HCT116 (cell line): ENCODE measurements at regions of chr5 and their contacts with region 1.

Region 1: GRCh38 chr5:83564069-83564749 is 92.7 kb downstream of the VCAN start:
- DNase-seq: peak; percentile 35
- ATAC-seq: peak; percentile 67
- H3K4me3 ChIP-seq: no peak overlapping the region
- H3K27ac ChIP-seq: no peak overlapping the region
- H3K4me1 ChIP-seq: peaks cover 9 to 13% of the 10 kb centered on the region in 2 experiments; a peak in 2 of 4 replicates
- H3K27me3 ChIP-seq: no peaks in the 10 kb centered on the region
- CTCF ChIP-seq: peak; percentile 29 to 71 (median 65); a peak in 4 of 6 replicates
- POLR2A ChIP-seq: no peak
- RAD21 ChIP-seq: peak; percentile 83

Region 2: GRCh38 chr5:82312373-82312856 is 1251.8 kb before region 1 on chr5:
- CTCF ChIA-PET with region 1: no interaction called
- POLR2A ChIA-PET with region 1: no interaction called
- RAD21 ChIA-PET with region 1: interaction called in 1 of 2 experiments, 8 read pairs
- intact Hi-C with region 1: loop called (anchors 1 kb)
- DNase-seq: peak; percentile 54
- ATAC-seq: peak; percentile 80
- H3K4me3 ChIP-seq: peak overlapping the region in 1 of 2 experiments; percentile 29; a peak in 1 of 4 replicates
- H3K27ac ChIP-seq: peak overlapping the region; percentile 53
- H3K4me1 ChIP-seq: peaks cover 17 to 18% of the 10 kb centered on the region in 2 experiments
- H3K27me3 ChIP-seq: no peaks in the 10 kb centered on the region
- CTCF ChIP-seq: peak; percentile 65 to 97 (median 87); a peak in 5 of 6 replicates
- POLR2A ChIP-seq: no peak
- RAD21 ChIP-seq: peak; percentile 90

Region 3: GRCh38 chr5:82597437-82597836 is 966.8 kb before region 1 on chr5:
- CTCF ChIA-PET with region 1: no interaction called
- POLR2A ChIA-PET with region 1: no interaction called
- RAD21 ChIA-PET with region 1: no interaction called
- intact Hi-C with region 1: loop called (anchors 5 kb)
- DNase-seq: peak; percentile 29
- ATAC-seq: peak; percentile 82
- H3K4me3 ChIP-seq: no peak overlapping the region
- H3K27ac ChIP-seq: no peak overlapping the region
- H3K4me1 ChIP-seq: no peaks in the 10 kb centered on the region
- H3K27me3 ChIP-seq: no peaks in the 10 kb centered on the region
- CTCF ChIP-seq: peak; percentile 28 to 65 (median 63); a peak in 5 of 6 replicates
- POLR2A ChIP-seq: no peak
- RAD21 ChIP-seq: peak; percentile 52

Region 4: GRCh38 chr5:82905986-82906385 is 658.2 kb before region 1 on chr5:
- CTCF ChIA-PET with region 1: no interaction called
- POLR2A ChIA-PET with region 1: no interaction called
- RAD21 ChIA-PET with region 1: no interaction called
- intact Hi-C with region 1: loop called (anchors 10 kb)
- DNase-seq: no peak
- ATAC-seq: no peak
- H3K4me3 ChIP-seq: no peak overlapping the region
- H3K27ac ChIP-seq: no peak overlapping the region
- H3K4me1 ChIP-seq: no peaks in the 10 kb centered on the region
- H3K27me3 ChIP-seq: no peaks in the 10 kb centered on the region
- CTCF ChIP-seq: no peak
- POLR2A ChIP-seq: no peak
- RAD21 ChIP-seq: no peak

Region 5: DNA sequence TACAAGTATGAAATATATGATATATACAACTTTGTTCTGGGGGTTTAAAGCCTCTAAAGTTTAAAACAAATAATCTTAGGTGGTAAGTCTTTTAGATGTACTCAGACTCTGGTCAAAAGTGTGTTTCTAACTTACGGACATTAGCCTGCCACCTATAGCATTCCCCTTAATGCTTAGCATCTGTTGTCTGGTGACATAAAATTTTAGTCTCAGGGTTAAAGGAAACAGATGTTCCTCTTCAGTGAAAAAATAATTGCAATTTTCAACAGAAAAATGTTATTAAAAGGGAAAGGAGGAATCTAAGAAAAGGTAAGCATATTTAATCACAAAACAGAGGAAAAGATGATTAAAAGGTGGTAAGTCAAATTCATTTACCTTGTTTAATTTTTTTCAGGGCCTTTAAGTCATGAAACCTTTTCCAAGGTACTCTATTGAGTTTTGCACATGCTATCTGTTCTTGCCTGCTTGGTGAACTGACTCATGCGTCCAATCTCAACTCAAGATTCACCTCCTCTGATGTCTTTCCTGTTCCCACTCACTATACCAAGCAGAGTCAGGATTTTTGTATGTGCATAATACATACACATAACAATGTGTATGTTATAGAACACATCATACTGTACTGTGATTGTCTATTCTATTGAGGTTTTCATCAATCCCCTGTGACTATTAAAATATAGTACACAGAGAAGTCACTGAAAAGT is 495.0 kb before region 1 on chr5:
- CTCF ChIA-PET with region 1: no interaction called
- POLR2A ChIA-PET with region 1: no interaction called
- RAD21 ChIA-PET with region 1: no interaction called
- intact Hi-C with region 1: loop called (anchors 5 kb)
- DNase-seq: no peak
- ATAC-seq: no peak
- H3K4me3 ChIP-seq: no peak overlapping the region
- H3K27ac ChIP-seq: no peak overlapping the region
- H3K4me1 ChIP-seq: no peaks in the 10 kb centered on the region; a peak in 1 of 4 replicates
- H3K27me3 ChIP-seq: no peaks in the 10 kb centered on the region
- CTCF ChIP-seq: no peak
- POLR2A ChIP-seq: no peak
- RAD21 ChIP-seq: no peak

Region 6: DNA sequence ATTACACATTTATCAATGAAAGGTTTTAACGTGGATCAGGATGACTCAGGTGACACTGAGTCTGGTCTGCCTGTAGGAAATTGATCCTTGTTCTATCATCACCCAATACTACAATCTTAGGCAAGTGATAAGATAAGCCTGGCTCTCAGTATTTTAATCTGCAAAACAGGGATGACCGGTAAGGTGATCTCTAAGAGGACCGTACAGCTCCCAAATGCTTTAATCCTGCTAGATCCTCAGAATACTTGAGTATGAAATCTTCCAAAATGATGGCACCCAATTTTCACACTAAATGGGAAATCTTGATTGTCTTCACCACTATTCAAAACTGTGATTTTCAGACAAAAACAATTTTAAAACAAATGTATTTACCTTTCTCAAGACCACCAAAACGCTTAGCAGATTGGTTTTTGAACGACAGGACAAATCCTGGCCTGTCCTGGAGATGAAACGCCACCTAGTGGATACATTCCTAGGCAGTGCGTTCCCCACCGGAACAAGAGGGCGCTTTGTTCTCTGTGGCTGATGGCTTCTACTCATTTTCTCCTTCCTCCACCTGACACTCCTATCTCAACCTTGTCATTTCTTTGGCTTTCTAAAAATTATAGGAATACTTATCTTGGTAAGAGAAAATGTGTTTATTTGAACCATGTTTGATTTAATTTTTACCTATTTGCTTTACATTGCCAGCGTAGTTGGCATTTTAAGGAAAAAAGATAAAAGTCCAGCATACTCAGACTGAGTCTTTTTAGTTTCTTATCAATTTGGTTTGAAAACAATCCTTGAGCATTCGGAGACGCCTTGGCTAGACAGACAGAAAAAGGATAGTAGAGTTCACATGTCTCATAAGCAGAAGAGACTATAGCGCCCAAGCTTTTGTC is 133.8 kb before region 1 on chr5:
- CTCF ChIA-PET with region 1: no interaction called
- POLR2A ChIA-PET with region 1: no interaction called
- RAD21 ChIA-PET with region 1: no interaction called
- intact Hi-C with region 1: no loop called
- DNase-seq: peak; percentile 75
- ATAC-seq: peak; percentile 98
- H3K4me3 ChIP-seq: no peak overlapping the region
- H3K27ac ChIP-seq: no peak overlapping the region
- H3K4me1 ChIP-seq: peaks cover 0 to 10% of the 10 kb centered on the region in 2 experiments; a peak in 2 of 4 replicates
- H3K27me3 ChIP-seq: no peaks in the 10 kb centered on the region
- CTCF ChIP-seq: peak; percentile 92 to 98 (median 96)
- POLR2A ChIP-seq: no peak
- RAD21 ChIP-seq: peak; percentile 91

Region 7: DNA sequence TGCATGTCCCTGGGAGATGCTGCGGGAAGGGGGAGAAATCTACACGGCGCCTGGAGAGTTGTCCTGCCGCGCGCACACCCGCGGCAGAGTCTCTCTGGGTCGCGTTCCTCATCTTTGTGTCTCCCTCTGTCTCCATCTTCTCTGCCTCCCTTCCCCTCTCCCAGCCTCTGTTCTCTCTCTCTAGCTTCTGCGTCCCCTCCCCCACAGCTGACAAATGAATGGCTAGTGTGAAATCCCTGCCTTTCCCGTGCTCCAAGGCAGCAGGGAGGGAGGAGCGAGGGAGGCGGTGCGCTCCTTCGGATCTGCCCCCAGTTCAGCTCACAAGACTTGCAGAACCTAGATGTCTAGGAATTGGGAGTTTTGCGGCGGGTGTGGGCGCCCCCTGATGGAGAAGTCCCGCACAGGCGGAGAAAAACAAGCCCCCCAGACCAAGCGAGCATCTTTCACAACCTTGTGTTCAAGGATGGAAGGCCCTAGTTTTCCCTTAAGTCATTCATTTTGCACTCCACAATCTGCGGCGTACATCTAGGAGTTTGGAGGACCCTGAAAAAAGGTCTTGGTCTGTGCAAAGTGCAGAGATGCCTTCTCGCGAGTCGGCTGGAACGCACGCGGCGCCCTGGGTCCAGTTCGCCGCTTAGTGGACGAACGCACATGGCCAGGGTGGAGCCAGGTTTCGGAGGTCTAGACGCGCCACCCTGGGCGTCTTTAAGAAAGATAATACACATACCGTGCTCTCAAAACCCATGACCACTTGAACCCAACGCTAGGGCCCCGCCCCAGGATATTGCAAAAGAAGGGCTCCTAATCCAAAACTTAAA is 90.7 kb before region 1 on chr5:
- CTCF ChIA-PET with region 1: no interaction called
- POLR2A ChIA-PET with region 1: no interaction called
- RAD21 ChIA-PET with region 1: no interaction called
- intact Hi-C with region 1: loop called (anchors 5 kb)
- DNase-seq: peak; percentile 86
- ATAC-seq: peak; percentile 65
- H3K4me3 ChIP-seq: peak overlapping the region; percentile 55 to 62
- H3K27ac ChIP-seq: peak overlapping the region; percentile 63
- H3K4me1 ChIP-seq: peaks cover 13 to 40% of the 10 kb centered on the region in 2 experiments
- H3K27me3 ChIP-seq: no peaks in the 10 kb centered on the region
- CTCF ChIP-seq: peak; percentile 44 to 86 (median 70); a peak in 5 of 6 replicates
- POLR2A ChIP-seq: no peak
- RAD21 ChIP-seq: peak; percentile 81